Transverse colon (tissue), 4 donors: ENCODE measurements at regions of chr3 and their contacts with region 1.

Region 1: DNA sequence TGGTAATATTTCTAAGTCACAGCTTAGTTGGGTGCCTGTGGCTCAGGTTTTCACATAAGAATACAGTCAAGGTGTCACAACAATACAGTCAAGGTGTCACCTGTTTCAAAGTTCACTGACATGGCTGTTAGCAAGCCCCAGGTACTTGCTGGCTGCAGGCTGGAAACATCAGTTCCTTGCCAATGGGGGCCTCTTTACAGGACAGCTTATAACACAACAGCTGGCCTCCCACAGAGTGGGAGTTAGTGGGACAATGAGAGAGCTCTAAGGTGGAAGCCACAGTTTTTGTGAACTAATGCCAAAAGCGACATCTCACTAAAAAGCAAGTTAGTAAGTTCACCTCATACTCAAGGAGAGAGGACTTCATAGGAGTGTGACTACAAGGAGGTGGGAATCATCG is 45.4 kb downstream of the GPR156 start:
- DNase-seq: no peak
- H3K4me3 ChIP-seq: no peak overlapping the region
- H3K27ac ChIP-seq: no peak overlapping the region
- H3K4me1 ChIP-seq: peaks cover 0 to 3% (median 0%) of the 10 kb centered on the region in 4 donors
- H3K27me3 ChIP-seq: no peaks in the 10 kb centered on the region
- CTCF ChIP-seq: no peak
- EP300 ChIP-seq: no peak
- POLR2A ChIP-seq: no peak

Region 2: DNA sequence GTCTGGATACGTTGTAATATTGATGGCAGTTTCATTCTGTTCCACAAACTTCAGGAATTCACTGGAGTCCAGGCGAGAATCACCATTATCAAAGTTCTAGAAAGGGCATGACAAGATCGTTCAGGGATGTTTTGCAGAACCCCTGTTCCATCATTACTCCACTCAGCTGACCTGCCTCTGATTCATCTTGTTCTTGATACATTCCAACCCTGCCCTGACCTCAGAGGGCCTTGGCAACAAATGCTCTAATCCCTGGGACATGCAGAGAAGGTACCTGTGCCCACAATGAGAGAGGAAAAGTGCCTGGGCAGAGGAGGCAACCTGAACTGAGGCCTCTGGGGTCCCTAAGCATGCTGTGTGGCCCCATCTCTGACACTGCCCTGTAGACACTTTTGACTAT is 165.2 kb after region 1 on chr3:
- in situ Hi-C with region 1: loop called (anchors 5 to 10 kb)
- intact Hi-C with region 1: no loop called
- DNase-seq: no peak
- H3K4me3 ChIP-seq: no peak overlapping the region
- H3K27ac ChIP-seq: no peak overlapping the region
- H3K4me1 ChIP-seq: no peaks in the 10 kb centered on the region
- H3K27me3 ChIP-seq: no peaks in the 10 kb centered on the region
- CTCF ChIP-seq: no peak
- EP300 ChIP-seq: no peak
- POLR2A ChIP-seq: no peak

Region 3: DNA sequence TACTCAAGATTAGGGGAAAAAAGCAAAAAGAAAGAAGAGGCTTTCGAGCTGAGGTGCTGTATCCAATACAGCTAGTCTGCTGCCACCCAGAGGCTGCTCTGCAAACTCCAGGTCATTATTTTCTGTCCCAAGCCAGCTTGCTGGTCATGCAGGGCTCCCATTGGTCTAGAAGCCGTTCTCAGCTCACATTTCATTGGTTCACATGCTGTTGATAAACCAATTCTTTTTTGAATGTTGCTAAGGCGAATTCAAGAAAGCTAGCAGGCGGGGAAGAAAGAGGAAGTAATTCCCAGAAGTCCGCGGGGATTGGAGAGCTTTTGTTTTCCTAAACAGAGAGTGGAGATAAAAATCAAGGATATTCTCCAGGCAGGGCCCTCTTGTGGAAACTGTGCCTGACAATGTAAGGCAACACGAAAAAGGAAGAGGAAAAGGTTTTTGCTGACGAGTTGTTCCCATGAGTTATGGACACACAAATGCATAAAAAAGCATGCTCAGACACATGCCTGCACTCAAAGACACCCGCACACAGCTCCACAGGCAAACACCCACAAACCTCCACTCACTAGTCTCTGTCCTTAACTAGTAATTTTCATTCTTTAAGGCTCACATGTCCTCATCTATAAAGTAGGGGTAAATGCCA is 177.7 kb after region 1 on chr3:
- in situ Hi-C with region 1: loop called in 1 of 4 experiments (anchors 10 kb)
- intact Hi-C with region 1: loop called (anchors 5 kb)
- DNase-seq: peak; percentile 96
- H3K4me3 ChIP-seq: peak overlapping the region in 1 of 4 donors; percentile 32
- H3K27ac ChIP-seq: peak overlapping the region; percentile 69 to 84 (median 80)
- H3K4me1 ChIP-seq: peaks cover 18 to 62% (median 31%) of the 10 kb centered on the region in 4 donors
- H3K27me3 ChIP-seq: no peaks in the 10 kb centered on the region
- CTCF ChIP-seq: peak; percentile 78 to 93 (median 85)
- EP300 ChIP-seq: no peak
- POLR2A ChIP-seq: no peak